Posterior vena cava (tissue), 2 donors: ENCODE measurements at regions of chr13 and their contacts with region 1.

Region 1: DNA sequence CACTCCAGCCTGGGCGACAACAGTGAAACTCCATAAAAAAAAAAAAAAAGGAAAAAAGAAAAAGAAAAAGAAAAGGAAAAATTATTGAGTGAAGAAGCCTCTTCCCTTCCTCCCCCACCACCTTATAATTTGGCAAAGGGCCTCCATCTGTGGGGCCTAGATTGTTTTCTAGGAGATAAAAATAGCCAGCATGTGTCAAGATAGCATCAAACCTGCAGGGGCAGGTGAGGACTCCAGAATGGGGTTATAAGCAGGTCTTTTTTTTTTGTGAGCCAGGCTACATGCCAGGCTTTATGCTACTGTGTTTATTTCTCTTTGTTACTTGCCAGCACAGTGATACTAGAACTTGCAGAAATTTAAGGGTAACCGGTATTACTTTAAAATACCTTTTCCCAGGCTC is 11.7 kb upstream of the TRIM13 start:
- DNase-seq: no peak

Region 2: GRCh38 chr13:50798923-50799322 is 813.8 kb after region 1 on chr13:
- intact Hi-C with region 1: loop called in 1 of 2 experiments (anchors 10 kb)
- DNase-seq: no peak